PC-3 (cell line): ENCODE measurements at regions of chr1 and their contacts with region 1.

Region 1: DNA sequence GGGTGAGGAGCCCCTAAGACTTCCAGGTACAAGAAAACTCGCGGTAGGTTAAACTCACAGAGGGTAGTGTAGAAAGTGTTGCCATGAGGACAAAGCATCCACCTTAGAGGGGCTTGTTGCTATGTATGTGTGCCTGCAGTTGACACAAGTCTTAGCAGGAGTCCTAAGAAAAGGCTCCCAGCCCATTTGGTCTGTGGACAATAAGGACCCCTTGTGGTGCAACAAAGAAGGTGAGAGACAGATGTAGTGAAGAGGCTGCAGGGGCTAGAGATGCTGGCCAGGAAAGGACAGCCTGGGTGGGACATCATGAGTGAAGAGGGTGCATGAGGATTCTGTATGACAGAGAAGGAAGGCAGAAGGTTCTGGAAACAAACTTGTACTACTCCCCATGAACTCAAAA is 36.3 kb upstream of the IL10 start:
- DNase-seq: peak; percentile 72
- ATAC-seq: peak; percentile 72
- H3K4me3 ChIP-seq: no peak overlapping the region
- H3K27ac ChIP-seq: no peak overlapping the region
- H3K4me1 ChIP-seq: peaks cover 8% of the 10 kb centered on the region; the same call in 1 of the 2 replicates
- H3K27me3 ChIP-seq: peaks cover 13% of the 10 kb centered on the region
- CTCF ChIP-seq: peak; percentile 75

Region 2: GRCh38 chr1:205827623-205828022 is 981.0 kb before region 1 on chr1:
- CTCF ChIA-PET with region 1: no interaction called
- POLR2A ChIA-PET with region 1: no interaction called
- intact Hi-C with region 1: no loop called
- DNase-seq: no peak
- ATAC-seq: peak; percentile 67
- H3K4me3 ChIP-seq: no peak overlapping the region
- H3K27ac ChIP-seq: no peak overlapping the region
- H3K4me1 ChIP-seq: no peaks in the 10 kb centered on the region
- H3K27me3 ChIP-seq: peaks cover 16% of the 10 kb centered on the region
- CTCF ChIP-seq: peak; percentile 43; the same call in 1 of the 2 replicates

Region 3: DNA sequence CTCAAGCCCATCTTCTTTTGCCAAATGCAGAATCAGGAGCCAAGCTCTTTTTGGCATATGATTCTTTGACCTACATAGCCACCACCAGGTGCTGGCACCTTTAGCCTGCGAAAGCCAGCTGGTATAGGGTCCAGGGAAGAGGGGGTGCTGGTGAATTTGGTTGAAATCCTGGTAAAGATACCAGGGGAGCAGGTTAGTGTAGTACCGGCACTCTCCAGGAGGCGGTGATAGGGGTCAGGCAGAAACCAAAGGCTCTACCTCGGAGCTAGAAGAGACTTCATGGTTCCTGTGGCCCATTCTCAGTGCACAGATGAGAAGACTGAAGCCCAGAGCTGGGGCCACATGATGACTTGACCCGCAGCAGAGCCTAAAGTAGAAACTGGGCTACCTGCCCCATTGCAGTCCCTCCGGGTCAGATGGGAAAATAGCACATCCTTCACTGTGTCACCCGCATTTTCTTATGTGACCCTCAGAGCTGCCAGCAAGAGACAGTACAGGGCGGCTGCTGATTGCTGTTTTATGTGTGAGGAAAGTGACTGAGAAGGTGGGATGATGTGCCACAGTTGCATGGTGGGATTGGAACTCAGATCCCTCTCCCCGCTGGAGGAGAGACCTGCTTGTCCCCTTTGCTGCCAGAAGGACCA is 74.0 kb before region 1 on chr1:
- CTCF ChIA-PET with region 1: interaction called, 12 read pairs
- POLR2A ChIA-PET with region 1: no interaction called
- intact Hi-C with region 1: loop called (anchors 1 kb)
- DNase-seq: peak; percentile 81
- ATAC-seq: peak; percentile 69
- H3K4me3 ChIP-seq: no peak overlapping the region
- H3K27ac ChIP-seq: no peak overlapping the region
- H3K4me1 ChIP-seq: peaks cover 6% of the 10 kb centered on the region
- H3K27me3 ChIP-seq: no peaks in the 10 kb centered on the region
- CTCF ChIP-seq: peak; percentile 95

Region 4: GRCh38 chr1:206792939-206793607 is 15.5 kb before region 1 on chr1:
- CTCF ChIA-PET with region 1: no interaction called
- POLR2A ChIA-PET with region 1: interaction called, 7 read pairs
- intact Hi-C with region 1: loop called (anchors 1 kb)
- DNase-seq: no peak
- ATAC-seq: no peak
- H3K4me3 ChIP-seq: no peak overlapping the region
- H3K27ac ChIP-seq: no peak overlapping the region
- H3K4me1 ChIP-seq: no peaks in the 10 kb centered on the region
- H3K27me3 ChIP-seq: peaks cover 29% of the 10 kb centered on the region
- CTCF ChIP-seq: no peak